ENCODE measurements at regions of chr11 and their contacts with region 1.

Region 1: GRCh38 chr11:74388678-74389327 is 9.4 kb downstream of the PGM2L1 start:
- DNase-seq: peak; percentile 58
- ATAC-seq: peak; percentile 97
- H3K4me3 ChIP-seq: no peak overlapping the region
- H3K27ac ChIP-seq: no peak overlapping the region
- H3K4me1 ChIP-seq: no peaks in the 10 kb centered on the region
- H3K27me3 ChIP-seq: no peaks in the 10 kb centered on the region
- CTCF ChIP-seq: peak; percentile 87

Region 2: GRCh38 chr11:74044538-74044937 is 344.3 kb before region 1 on chr11:
- CTCF ChIA-PET with region 1: interaction called, 11 read pairs
- POLR2A ChIA-PET with region 1: no interaction called
- in situ Hi-C with region 1: no loop called
- intact Hi-C with region 1: no loop called
- DNase-seq: no peak
- ATAC-seq: no peak
- H3K4me3 ChIP-seq: no peak overlapping the region
- H3K27ac ChIP-seq: no peak overlapping the region
- H3K4me1 ChIP-seq: no peaks in the 10 kb centered on the region
- H3K27me3 ChIP-seq: no peaks in the 10 kb centered on the region
- CTCF ChIP-seq: no peak

Region 3: DNA sequence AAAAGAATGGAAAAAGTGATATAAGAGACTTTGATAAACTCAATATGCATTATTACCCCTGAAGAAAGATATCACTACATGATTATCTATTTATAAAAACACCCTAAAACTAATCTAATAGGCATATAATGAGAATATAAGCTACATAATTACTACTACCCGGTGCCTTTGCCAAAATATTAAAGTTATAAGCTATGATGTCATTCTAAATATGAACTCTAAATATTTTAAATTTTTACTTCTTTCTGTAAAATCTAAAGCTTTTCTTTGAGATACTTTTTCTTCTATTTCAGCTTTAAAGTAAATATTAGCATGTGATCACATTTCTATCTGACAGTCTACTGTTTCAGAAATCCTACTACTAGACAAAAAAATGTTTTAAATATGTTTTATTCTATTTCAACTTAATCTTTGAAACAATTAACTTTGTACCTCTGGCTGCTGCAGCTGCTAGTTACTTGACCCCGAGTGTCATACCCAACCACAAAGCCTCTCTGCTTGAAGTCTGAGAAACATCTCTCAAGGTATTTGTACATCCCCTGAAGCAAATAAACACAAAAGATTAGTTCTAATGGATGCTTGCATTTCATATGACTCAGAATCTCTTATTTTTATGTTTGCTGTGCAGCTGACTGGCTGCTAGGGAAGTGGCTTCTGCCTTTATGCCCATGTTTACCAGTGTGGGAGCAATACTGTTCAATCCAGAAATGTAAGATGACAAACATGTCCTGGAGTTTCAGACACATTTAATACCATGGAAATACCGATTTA is 17.3 kb before region 1 on chr11:
- CTCF ChIA-PET with region 1: no interaction called
- POLR2A ChIA-PET with region 1: interaction called, 13 read pairs
- in situ Hi-C with region 1: no loop called
- intact Hi-C with region 1: no loop called
- DNase-seq: no peak
- ATAC-seq: peak; percentile 93
- H3K4me3 ChIP-seq: no peak overlapping the region
- H3K27ac ChIP-seq: no peak overlapping the region; the same call in 1 of the 2 replicates
- H3K4me1 ChIP-seq: peaks cover 15% of the 10 kb centered on the region
- H3K27me3 ChIP-seq: no peaks in the 10 kb centered on the region
- CTCF ChIP-seq: no peak

Region 4: DNA sequence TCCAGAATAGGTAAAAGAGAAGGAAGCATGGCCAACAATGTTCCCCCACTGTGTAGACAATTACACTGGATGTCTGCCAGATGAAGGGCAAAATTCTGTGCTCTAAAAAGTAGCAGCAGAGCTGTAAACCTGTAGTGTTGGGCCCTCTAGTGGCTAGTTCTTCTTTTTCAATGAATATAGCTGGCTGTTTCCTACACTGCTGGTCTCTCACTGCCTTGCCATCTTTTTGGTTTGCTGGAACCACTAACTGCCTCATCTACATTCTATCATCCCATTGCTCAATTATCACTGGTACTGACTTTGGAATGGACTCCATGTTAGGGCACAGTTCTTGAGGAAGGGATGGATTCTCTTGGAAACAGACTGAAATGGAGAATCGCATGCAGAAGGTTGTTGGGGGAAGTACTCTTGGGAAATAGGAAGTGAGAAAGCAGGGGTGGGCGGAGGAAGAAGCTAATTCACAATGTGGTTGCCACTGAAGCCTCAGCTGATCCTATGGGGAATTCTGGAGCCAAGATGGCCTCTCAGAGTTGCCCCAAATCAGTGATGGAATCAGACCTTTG is 60.6 kb after region 1 on chr11:
- CTCF ChIA-PET with region 1: interaction called, 18 read pairs
- POLR2A ChIA-PET with region 1: no interaction called
- in situ Hi-C with region 1: no loop called
- intact Hi-C with region 1: loop called (anchors 2 kb)
- DNase-seq: peak; percentile 65
- ATAC-seq: peak; percentile 87
- H3K4me3 ChIP-seq: no peak overlapping the region
- H3K27ac ChIP-seq: no peak overlapping the region
- H3K4me1 ChIP-seq: no peaks in the 10 kb centered on the region
- H3K27me3 ChIP-seq: peaks cover 2% of the 10 kb centered on the region; the same call in 1 of the 2 replicates
- CTCF ChIP-seq: peak; percentile 86

Region 5: DNA sequence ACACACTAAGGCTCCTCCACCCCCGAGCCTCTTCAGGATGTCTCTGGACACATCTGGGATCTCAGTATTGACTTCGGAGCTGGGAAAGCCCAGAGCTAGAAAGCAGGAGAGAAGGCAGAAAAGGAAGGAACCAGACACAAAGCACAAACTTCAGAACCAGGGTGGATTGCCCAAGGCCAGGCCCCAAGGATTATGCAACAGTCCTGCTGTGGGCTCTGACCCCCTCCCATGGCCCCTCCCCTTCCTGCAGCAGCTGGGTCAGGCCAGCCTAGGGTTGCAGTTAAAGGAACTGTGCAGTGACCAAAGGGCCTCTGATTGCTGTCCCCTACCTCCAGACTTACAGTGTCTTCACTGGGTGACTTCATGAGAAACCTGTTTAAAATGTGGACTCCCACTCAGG is 73.2 kb after region 1 on chr11:
- CTCF ChIA-PET with region 1: no interaction called
- POLR2A ChIA-PET with region 1: no interaction called
- in situ Hi-C with region 1: no loop called
- intact Hi-C with region 1: no loop called
- DNase-seq: no peak
- ATAC-seq: no peak
- H3K4me3 ChIP-seq: no peak overlapping the region
- H3K27ac ChIP-seq: no peak overlapping the region
- H3K4me1 ChIP-seq: no peaks in the 10 kb centered on the region
- H3K27me3 ChIP-seq: peaks cover 6% of the 10 kb centered on the region
- CTCF ChIP-seq: no peak

Region 6: DNA sequence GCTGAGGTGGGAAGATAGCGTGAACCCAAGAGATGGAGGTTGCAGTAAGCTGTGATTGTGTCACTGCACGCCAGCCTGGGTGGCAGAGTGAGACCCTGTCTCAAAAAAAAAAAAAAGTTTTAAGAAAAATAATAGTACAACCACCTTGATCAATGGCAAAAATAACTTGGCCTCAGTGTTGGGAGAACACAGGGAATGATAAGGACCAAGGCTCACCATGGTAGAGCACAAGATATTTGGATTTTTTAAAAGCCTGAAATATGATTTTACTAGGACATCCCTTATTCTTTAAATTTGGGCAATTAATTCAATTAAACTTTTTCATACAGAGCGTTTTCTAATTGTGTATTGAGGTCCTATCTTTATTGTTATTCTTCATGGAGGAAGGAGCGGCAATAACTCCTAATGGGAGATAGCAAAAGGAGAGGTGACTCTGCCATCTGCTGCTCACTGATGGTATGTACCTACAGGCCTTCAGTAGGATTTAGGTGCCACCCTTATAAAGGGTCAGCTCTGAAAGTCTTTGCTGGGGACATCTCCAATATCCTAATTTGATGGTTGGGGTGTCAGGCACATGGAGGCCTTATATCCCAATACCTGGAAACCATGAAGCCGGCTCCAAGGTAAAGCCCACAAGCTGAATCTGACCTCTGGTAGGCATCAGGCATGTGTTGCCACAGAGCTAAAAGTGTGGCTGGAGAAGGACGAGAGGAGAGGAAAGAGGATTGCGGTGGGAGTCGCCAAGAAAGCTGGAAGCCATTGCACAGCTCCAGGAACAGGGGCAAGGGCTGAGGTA is 181.7 kb after region 1 on chr11:
- CTCF ChIA-PET with region 1: interaction called, 13 read pairs
- POLR2A ChIA-PET with region 1: no interaction called
- in situ Hi-C with region 1: no loop called
- intact Hi-C with region 1: no loop called
- DNase-seq: peak; percentile 25
- ATAC-seq: peak; percentile 96
- H3K4me3 ChIP-seq: no peak overlapping the region
- H3K27ac ChIP-seq: no peak overlapping the region
- H3K4me1 ChIP-seq: no peaks in the 10 kb centered on the region
- H3K27me3 ChIP-seq: no peaks in the 10 kb centered on the region; the same call in 1 of the 2 replicates
- CTCF ChIP-seq: peak; percentile 88

Region 7: GRCh38 chr11:74731301-74732094 is 342.7 kb after region 1 on chr11 and contains the start of gene CHRDL2:
- CTCF ChIA-PET with region 1: no interaction called
- POLR2A ChIA-PET with region 1: no interaction called
- in situ Hi-C with region 1: no loop called
- intact Hi-C with region 1: no loop called
- DNase-seq: no peak
- ATAC-seq: peak; percentile 69
- H3K4me3 ChIP-seq: peak within 1 kb of the TSS; percentile 15 to 21
- H3K27ac ChIP-seq: no peak within 1 kb of the TSS
- H3K4me1 ChIP-seq: 0 out of 2 replicates have a peak, but pooled peaks cover 4% of the 10 kb centered on the region
- H3K27me3 ChIP-seq: peaks cover 44% of the 10 kb centered on the region
- CTCF ChIP-seq: no peak
- total RNA-seq, gene CHRDL2: 0.15 TPM

Region 8: GRCh38 chr11:75188671-75189070 is 799.9 kb after region 1 on chr11:
- CTCF ChIA-PET with region 1: no interaction called
- POLR2A ChIA-PET with region 1: interaction called, 17 read pairs
- in situ Hi-C with region 1: no loop called
- intact Hi-C with region 1: no loop called
- DNase-seq: no peak
- ATAC-seq: no peak
- H3K4me3 ChIP-seq: no peak overlapping the region
- H3K27ac ChIP-seq: no peak overlapping the region
- H3K4me1 ChIP-seq: no peaks in the 10 kb centered on the region
- H3K27me3 ChIP-seq: 0 out of 2 replicates have a peak, but pooled peaks cover 3% of the 10 kb centered on the region
- CTCF ChIP-seq: no peak

Measured in Panc1 (cell line).